ENCODE measurements at regions of chr2 and their contacts with region 1.

Region 1: DNA sequence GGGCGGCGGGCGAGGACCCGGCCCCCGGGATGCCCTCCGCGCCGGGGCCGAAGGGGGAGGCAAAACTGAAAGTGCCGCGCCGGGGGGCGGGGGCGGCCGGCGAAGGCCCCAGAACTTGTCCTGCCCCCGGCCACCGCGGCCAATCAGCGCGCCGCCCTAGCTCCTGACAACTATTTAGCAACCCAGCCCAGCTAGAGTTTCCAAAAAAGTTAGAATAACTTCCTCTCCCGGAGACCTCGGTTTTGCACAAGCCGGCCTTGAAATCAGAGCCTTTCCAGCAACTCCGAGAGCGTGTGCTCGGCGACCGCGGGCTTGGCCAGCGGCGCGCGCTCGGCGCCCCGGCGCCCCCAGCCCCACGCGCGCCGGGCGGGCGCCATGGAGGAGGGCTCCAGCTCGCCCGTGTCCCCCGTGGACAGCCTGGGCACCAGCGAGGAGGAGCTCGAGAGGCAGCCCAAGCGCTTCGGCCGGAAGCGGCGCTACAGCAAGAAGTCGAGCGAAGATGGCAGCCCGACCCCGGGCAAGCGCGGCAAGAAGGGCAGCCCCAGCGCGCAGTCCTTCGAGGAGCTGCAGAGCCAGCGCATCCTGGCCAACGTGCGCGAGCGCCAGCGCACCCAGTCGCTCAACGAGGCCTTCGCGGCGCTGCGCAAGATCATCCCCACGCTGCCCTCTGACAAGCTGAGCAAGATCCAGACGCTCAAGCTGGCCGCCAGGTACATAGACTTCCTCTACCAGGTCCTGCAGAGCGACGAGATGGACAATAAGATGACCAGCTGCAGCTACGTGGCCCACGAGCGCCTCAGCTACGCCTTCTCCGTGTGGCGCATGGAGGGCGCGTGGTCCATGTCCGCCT is at the start of gene TWIST2:
- DNase-seq: peak; percentile 48 to 92
- H3K4me3 ChIP-seq: peak within 1 kb of the TSS; percentile 80 to 86
- H3K27ac ChIP-seq: peak within 1 kb of the TSS; percentile 80 to 88
- H3K4me1 ChIP-seq: peaks cover 0 to 15% of the 10 kb centered on the region in 2 donors
- H3K27me3 ChIP-seq: no peaks in the 10 kb centered on the region
- CTCF ChIP-seq: peak in 2 of 3 experiments; percentile 10 to 33
- total RNA-seq, gene TWIST2: 108 TPM

Region 2: GRCh38 chr2:238864207-238865014 is 16.3 kb after region 1 on chr2:
- intact Hi-C with region 1: loop called (anchors 1 kb)
- DNase-seq: peak; percentile 79 to 96
- H3K4me3 ChIP-seq: peak overlapping the region; percentile 15 to 48
- H3K27ac ChIP-seq: peak overlapping the region; percentile 86 to 92
- H3K4me1 ChIP-seq: peaks cover 26 to 53% of the 10 kb centered on the region in 2 donors
- H3K27me3 ChIP-seq: no peaks in the 10 kb centered on the region
- CTCF ChIP-seq: no peak

Region 3: GRCh38 chr2:238895891-238896600 is 48.0 kb after region 1 on chr2:
- intact Hi-C with region 1: loop called (anchors 1 kb)
- DNase-seq: peak in 1 of 2 donors; percentile 89
- H3K4me3 ChIP-seq: peak overlapping the region in 1 of 2 donors; percentile 15
- H3K27ac ChIP-seq: peak overlapping the region; percentile 54 to 62
- H3K4me1 ChIP-seq: peaks cover 8 to 10% of the 10 kb centered on the region in 2 donors
- H3K27me3 ChIP-seq: no peaks in the 10 kb centered on the region
- CTCF ChIP-seq: no peak

Region 4: DNA sequence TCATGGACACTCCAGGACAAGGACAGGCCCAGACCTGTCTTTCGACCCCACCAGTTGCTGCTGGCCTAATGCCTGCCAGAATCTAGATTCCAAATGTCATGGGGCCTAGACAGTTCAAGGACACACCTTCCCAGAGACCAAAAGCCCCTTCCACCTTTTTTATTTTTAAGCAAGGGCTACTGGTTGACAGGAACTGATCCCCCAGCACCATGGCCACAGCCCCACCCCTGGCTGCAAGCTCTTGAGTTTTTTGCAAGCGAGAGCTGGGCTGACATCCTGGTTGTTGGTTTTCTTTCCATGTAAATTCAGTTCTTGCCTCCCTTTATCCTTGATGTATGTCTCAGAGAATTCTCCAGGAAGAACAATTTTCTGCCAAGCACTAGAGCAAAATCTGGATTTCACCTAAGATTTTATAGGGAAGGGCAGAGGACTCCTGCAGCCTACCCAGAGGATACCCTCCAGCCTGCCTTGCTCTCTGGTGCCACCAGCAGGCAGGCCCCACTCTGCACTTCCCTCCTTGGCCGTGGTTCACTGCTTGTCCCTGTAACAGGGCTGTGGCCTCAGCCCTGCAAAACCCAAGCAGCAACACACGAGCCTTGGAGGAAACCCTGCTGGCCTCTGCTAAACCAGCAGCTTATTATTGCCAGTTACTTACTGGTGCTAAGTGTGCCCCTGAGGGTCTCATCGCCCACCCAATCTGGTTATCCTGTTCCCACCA is 97.5 kb after region 1 on chr2:
- intact Hi-C with region 1: loop called (anchors 5 kb)
- DNase-seq: peak in 1 of 2 donors; percentile 76
- H3K4me3 ChIP-seq: no peak overlapping the region
- H3K27ac ChIP-seq: no peak overlapping the region
- H3K4me1 ChIP-seq: no peaks in the 10 kb centered on the region
- H3K27me3 ChIP-seq: no peaks in the 10 kb centered on the region
- CTCF ChIP-seq: peak; percentile 48 to 86 (median 65)